ENCODE measurements at regions of chr22 and their contacts with region 1.

Region 1: GRCh38 chr22:31080848-31081649 is at the start of gene SMTN:
- DNase-seq: peak; percentile 96
- H3K4me3 Mint-ChIP-seq: peak within 1 kb of the TSS; percentile 91
- H3K27ac Mint-ChIP-seq: peak within 1 kb of the TSS; percentile 82
- H3K4me1 Mint-ChIP-seq: peaks cover 28% of the 10 kb centered on the region
- H3K27me3 Mint-ChIP-seq: no peaks in the 10 kb centered on the region
- CTCF ChIP-seq: no peak
- total RNA-seq, gene SMTN: 59.7 and 61.0 TPM in 2 replicates

Region 2: DNA sequence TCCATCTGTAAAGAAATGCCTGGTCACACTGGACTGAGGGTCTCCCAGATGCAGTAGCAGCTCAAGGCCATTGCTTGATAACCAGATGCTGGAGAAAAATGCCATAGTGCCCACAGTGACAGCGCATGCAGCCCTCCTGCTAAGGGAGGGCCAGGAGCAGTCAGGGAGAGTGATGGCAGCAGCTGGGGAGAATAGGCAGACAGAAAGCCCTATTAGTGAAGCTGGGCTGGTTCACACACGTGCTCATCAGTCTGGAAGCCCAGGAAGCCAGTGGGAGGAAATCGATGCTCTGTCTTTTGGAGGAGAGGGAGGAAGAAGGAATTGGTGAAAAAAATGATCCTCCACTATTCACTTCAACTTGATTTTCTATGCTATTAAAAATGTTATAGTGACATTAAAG is 303.5 kb before region 1 on chr22:
- CTCF ChIA-PET with region 1: no interaction called
- intact Hi-C with region 1: no loop called
- DNase-seq: no peak
- H3K4me3 Mint-ChIP-seq: no peak overlapping the region
- H3K27ac Mint-ChIP-seq: no peak overlapping the region
- H3K4me1 Mint-ChIP-seq: peaks cover 9% of the 10 kb centered on the region
- H3K27me3 Mint-ChIP-seq: no peaks in the 10 kb centered on the region
- CTCF ChIP-seq: no peak

Region 3: GRCh38 chr22:30947816-30948454 is 133.1 kb before region 1 on chr22:
- CTCF ChIA-PET with region 1: interaction called, 5 read pairs
- intact Hi-C with region 1: loop called (anchors 1 kb)
- DNase-seq: no peak
- H3K4me3 Mint-ChIP-seq: no peak overlapping the region
- H3K27ac Mint-ChIP-seq: no peak overlapping the region
- H3K4me1 Mint-ChIP-seq: no peaks in the 10 kb centered on the region
- H3K27me3 Mint-ChIP-seq: no peaks in the 10 kb centered on the region
- CTCF ChIP-seq: no peak

Region 4: DNA sequence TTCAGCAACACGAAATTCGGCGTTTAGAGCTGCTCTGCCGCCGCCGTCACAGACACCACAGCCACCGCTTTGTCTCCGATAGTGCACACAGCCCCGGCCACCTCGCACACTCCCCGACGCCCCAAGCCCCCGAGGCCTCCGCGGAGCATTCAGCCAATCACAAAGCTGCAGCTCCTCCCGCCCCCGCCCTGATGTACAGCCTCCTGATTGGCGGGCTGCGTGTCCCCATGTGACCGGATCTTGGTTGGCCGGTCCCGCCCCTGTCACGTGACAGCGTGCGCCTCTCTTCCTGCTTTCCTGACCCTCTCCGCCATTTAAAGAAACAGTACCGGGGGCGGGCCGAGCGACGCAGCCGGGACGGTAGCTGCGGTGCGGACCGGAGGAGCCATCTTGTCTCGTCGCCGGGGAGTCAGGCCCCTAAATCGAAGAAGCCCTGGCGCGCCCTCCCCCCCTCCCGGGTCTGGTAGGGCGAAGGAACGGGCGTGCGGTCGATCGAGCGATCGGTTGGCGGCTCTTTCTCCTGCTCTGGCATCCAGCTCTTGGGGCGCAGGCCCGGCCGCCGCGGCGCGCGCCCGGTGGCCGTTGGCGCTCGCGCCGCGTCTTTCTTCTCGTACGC is 112.0 kb before region 1 on chr22 and contains the start of gene TUG1:
- CTCF ChIA-PET with region 1: interaction called, 8 read pairs
- intact Hi-C with region 1: loop called (anchors 5 kb)
- DNase-seq: peak; percentile 98
- H3K4me3 Mint-ChIP-seq: peak within 1 kb of the TSS; percentile 96
- H3K27ac Mint-ChIP-seq: peak within 1 kb of the TSS; percentile 99
- H3K4me1 Mint-ChIP-seq: peaks cover 7% of the 10 kb centered on the region
- H3K27me3 Mint-ChIP-seq: no peaks in the 10 kb centered on the region
- CTCF ChIP-seq: no peak
- total RNA-seq, gene TUG1: 122 and 125 TPM in 2 replicates

Measured in Calu3 (cell line).